Left colon (tissue), 2 donors: ENCODE measurements at regions of chr22 and their contacts with region 1.

Region 1: GRCh38 chr22:34579519-34579918 is 486.4 kb upstream of the ISX start:
- DNase-seq: no peak
- ATAC-seq: no peak

Region 2: GRCh38 chr22:34526681-34527080 is 52.8 kb before region 1 on chr22:
- intact Hi-C with region 1: loop called in 1 of 2 experiments (anchors 10 kb)
- DNase-seq: no peak
- ATAC-seq: no peak

Region 3: DNA sequence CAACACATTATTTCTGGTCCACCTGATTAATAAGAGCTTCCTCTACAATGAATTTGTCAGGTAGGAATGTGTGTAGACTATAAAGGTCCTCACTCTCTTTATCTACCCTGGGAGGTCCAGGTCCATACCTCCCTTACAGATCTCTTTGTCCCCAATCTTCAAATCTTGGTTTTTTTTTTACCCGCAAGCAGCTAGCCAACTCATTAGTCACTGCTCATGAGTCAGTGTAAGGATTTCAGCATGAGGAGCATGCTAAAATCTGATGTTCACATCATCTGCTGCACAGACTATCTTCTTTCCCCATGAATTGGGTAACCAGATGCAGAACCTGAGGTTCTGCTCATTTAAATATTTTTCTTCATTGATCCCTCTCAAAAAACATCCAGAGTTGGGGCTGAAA is 89.5 kb after region 1 on chr22:
- intact Hi-C with region 1: no loop called
- DNase-seq: no peak
- ATAC-seq: no peak